ENCODE measurements at regions of chr5 and their contacts with region 1.

Region 1: DNA sequence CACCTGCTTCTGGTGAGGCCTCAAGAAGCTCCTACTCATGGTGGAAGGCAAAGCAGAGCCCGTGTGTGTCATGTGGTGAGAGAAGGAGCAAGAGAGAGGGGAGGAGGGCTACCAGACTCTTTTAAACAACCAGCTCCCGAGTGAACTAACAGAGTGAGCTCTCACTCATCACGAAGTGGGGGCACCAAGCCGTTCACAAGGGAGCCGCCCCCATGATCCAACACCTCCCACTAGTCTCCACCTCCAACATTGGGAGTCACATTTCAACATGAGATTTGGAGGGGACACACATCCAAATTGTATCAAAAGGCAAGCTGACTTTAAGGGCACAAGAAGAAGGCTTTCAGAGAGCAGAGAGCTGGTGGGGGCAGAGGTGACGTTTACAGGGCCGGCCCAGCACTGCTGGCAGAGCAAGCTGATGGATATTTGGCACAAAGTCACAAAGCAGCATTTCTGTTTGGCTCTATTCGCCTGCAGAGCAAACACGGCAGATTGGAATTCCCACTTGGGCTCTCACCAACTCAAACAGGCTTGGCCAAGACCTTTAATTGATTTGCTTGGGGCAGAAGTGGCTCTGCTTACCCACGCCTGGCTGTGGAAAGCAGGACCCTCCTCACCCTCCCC is 20.0 kb downstream of the PITX1 start:
- DNase-seq: no peak
- H3K4me3 ChIP-seq: no peak overlapping the region
- H3K27ac ChIP-seq: no peak overlapping the region
- H3K4me1 ChIP-seq: no peaks in the 10 kb centered on the region
- H3K27me3 ChIP-seq: no peaks in the 10 kb centered on the region
- CTCF ChIP-seq: no peak

Region 2: GRCh38 chr5:134503088-134503946 is 510.7 kb before region 1 on chr5:
- CTCF ChIA-PET with region 1: no interaction called
- POLR2A ChIA-PET with region 1: no interaction called
- intact Hi-C with region 1: no loop called
- DNase-seq: peak; percentile 85 to 91
- H3K4me3 ChIP-seq: no peak overlapping the region
- H3K27ac ChIP-seq: peak overlapping the region; percentile 86
- H3K4me1 ChIP-seq: peaks cover 69% of the 10 kb centered on the region
- H3K27me3 ChIP-seq: no peaks in the 10 kb centered on the region
- CTCF ChIP-seq: no peak

Region 3: DNA sequence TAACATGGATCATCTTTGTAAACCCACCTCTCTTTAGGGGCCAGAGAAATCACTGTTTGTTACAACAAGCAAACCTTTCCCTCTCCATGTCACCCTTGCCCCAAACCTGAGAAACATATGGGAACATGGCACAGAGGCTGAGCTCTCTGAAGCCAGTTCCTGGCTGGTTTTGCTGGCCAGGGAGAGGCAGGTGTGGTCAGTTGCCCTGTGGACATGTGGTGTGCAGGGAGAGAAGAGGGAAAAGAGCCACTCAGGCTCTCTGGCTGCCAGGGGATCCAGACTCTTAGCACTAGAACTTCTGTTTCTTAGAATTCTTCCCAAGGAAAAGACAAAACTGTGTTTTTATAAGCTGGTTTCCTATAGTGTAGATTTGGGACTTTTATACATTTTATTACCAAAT is 51.0 kb before region 1 on chr5:
- CTCF ChIA-PET with region 1: no interaction called
- POLR2A ChIA-PET with region 1: interaction called, 12 read pairs
- intact Hi-C with region 1: no loop called
- DNase-seq: no peak
- H3K4me3 ChIP-seq: no peak overlapping the region
- H3K27ac ChIP-seq: no peak overlapping the region
- H3K4me1 ChIP-seq: peaks cover 25% of the 10 kb centered on the region
- H3K27me3 ChIP-seq: no peaks in the 10 kb centered on the region
- CTCF ChIP-seq: no peak

Region 4: GRCh38 chr5:135063631-135064570 is 49.8 kb after region 1 on chr5:
- CTCF ChIA-PET with region 1: no interaction called
- POLR2A ChIA-PET with region 1: no interaction called
- intact Hi-C with region 1: loop called (anchors 10 kb)
- DNase-seq: no peak
- H3K4me3 ChIP-seq: no peak overlapping the region
- H3K27ac ChIP-seq: no peak overlapping the region
- H3K4me1 ChIP-seq: no peaks in the 10 kb centered on the region
- H3K27me3 ChIP-seq: no peaks in the 10 kb centered on the region
- CTCF ChIP-seq: no peak

Region 5: GRCh38 chr5:135139381-135140137 is 125.5 kb after region 1 on chr5:
- CTCF ChIA-PET with region 1: no interaction called
- POLR2A ChIA-PET with region 1: no interaction called
- intact Hi-C with region 1: loop called (anchors 2 kb)
- DNase-seq: peak; percentile 70 to 93
- H3K4me3 ChIP-seq: peak overlapping the region; percentile 43; the same call in 1 of the 2 replicates
- H3K27ac ChIP-seq: peak overlapping the region; percentile 97
- H3K4me1 ChIP-seq: peaks cover 85% of the 10 kb centered on the region
- H3K27me3 ChIP-seq: no peaks in the 10 kb centered on the region
- CTCF ChIP-seq: no peak

Region 6: DNA sequence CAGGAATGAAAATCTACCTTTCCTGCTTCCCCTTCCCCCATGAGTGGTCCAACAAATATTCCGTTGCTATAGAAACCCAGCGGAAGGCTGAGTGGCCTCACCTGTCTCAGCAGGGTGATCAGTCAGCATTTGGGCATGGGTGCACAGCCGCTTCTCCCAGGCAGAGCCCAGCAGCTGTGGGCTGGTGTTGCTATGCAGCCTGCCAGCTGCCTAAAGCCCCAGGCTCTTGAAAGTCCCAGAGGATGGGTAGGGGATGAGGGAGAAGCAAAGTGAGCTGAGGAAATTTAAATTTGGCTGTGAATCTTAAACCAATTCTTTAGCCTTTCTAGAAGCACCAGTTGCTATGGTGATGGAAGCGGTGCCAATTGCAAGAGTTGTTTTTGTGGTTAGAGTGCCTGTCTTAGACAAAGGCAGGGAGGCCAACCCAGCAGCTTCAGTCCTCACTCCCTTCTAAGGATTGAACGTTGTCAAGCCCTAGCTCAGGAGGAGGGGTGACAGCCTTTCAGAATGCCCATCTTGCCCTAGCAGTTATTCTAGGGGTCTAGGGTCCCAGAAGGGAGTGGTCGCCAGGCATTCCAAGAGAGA is 171.5 kb after region 1 on chr5:
- CTCF ChIA-PET with region 1: no interaction called
- POLR2A ChIA-PET with region 1: no interaction called
- intact Hi-C with region 1: loop called (anchors 1 kb)
- DNase-seq: no peak
- H3K4me3 ChIP-seq: no peak overlapping the region
- H3K27ac ChIP-seq: no peak overlapping the region; the same call in 1 of the 2 replicates
- H3K4me1 ChIP-seq: peaks cover 26% of the 10 kb centered on the region
- H3K27me3 ChIP-seq: no peaks in the 10 kb centered on the region
- CTCF ChIP-seq: no peak

Region 7: GRCh38 chr5:135191084-135191826 is 177.2 kb after region 1 on chr5:
- CTCF ChIA-PET with region 1: no interaction called
- POLR2A ChIA-PET with region 1: no interaction called
- intact Hi-C with region 1: loop called (anchors 1 kb)
- DNase-seq: peak; percentile 70 to 86
- H3K4me3 ChIP-seq: peak overlapping the region; percentile 59
- H3K27ac ChIP-seq: no peak overlapping the region
- H3K4me1 ChIP-seq: peaks cover 24% of the 10 kb centered on the region
- H3K27me3 ChIP-seq: no peaks in the 10 kb centered on the region
- CTCF ChIP-seq: peak; percentile 94

Region 8: GRCh38 chr5:135239453-135240282 is 225.6 kb after region 1 on chr5:
- CTCF ChIA-PET with region 1: no interaction called
- POLR2A ChIA-PET with region 1: no interaction called
- intact Hi-C with region 1: no loop called
- DNase-seq: no peak
- H3K4me3 ChIP-seq: no peak overlapping the region
- H3K27ac ChIP-seq: no peak overlapping the region
- H3K4me1 ChIP-seq: peaks cover 1% of the 10 kb centered on the region; the same call in 1 of the 2 replicates
- H3K27me3 ChIP-seq: no peaks in the 10 kb centered on the region
- CTCF ChIP-seq: no peak

Region 9: GRCh38 chr5:135332519-135333150 is 318.6 kb after region 1 on chr5:
- CTCF ChIA-PET with region 1: no interaction called
- POLR2A ChIA-PET with region 1: no interaction called
- intact Hi-C with region 1: loop called (anchors 10 kb)
- DNase-seq: peak in 1 of 2 experiments; percentile 69
- H3K4me3 ChIP-seq: no peak overlapping the region
- H3K27ac ChIP-seq: no peak overlapping the region
- H3K4me1 ChIP-seq: no peaks in the 10 kb centered on the region
- H3K27me3 ChIP-seq: no peaks in the 10 kb centered on the region
- CTCF ChIP-seq: peak; percentile 75